ENCODE measurements at regions of chr17 and their contacts with region 1.

Region 1: GRCh38 chr17:7239091-7240027 is at the start of gene PHF23:
- DNase-seq: peak; percentile 98
- H3K4me3 Mint-ChIP-seq: peak within 1 kb of the TSS; percentile 87
- H3K27ac Mint-ChIP-seq: peak within 1 kb of the TSS; percentile 92
- H3K4me1 Mint-ChIP-seq: peaks cover 71% of the 10 kb centered on the region
- H3K27me3 Mint-ChIP-seq: no peaks in the 10 kb centered on the region
- total RNA-seq, gene PHF23: 45.9 to 53.1 TPM

Region 2: DNA sequence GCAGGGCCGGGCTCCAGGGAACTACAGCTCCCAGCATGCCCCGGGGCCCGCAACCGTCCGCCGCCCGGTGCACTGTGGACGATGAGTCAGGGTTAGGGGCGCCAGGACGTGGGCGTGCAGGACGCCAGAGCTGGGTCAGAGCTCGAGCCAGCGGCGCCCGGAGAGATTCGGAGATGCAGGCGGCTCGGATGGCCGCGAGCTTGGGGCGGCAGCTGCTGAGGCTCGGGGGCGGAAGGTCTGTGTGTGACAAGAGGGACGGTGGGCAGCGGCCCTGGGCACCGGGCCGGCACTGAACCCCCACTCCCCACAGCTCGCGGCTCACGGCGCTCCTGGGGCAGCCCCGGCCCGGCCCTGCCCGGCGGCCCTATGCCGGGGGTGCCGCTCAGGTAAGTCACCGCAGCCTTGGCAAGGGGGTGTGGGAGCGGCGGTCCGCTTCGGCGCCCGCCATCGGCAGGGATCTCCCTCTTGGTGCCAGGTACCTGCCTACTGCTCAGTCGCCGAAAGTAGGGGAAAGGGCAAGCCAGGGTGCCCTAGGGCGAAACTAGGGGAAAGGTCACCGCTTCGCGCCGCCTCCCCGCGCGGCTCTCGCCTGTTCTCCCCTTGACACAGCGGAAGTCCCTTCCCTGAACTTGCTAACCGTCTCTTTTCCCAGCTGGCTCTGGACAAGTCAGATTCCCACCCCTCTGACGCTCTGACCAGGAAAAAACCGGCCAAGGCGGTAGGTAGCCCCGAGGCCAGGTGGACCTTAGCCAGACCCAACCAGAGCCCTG is 19.4 kb before region 1 on chr17 and contains the starts of genes ACADVL and DLG4:
- CTCF ChIA-PET with region 1: interaction called, 44 read pairs
- POLR2A ChIA-PET with region 1: interaction called, 100 read pairs
- DNase-seq: peak; percentile 84
- H3K4me3 Mint-ChIP-seq: peak within 1 kb of the TSS; percentile 93
- H3K27ac Mint-ChIP-seq: peak within 1 kb of the TSS; percentile 89
- H3K4me1 Mint-ChIP-seq: peaks cover 48% of the 10 kb centered on the region
- H3K27me3 Mint-ChIP-seq: no peaks in the 10 kb centered on the region
- total RNA-seq, gene ACADVL: 364 to 370 TPM
- total RNA-seq, gene DLG4: 5.2 to 5.3 TPM

Region 3: GRCh38 chr17:7252176-7253043 is 13.1 kb after region 1 on chr17 and contains the start of gene ELP5:
- CTCF ChIA-PET with region 1: interaction called, 4 read pairs
- POLR2A ChIA-PET with region 1: interaction called, 74 read pairs
- DNase-seq: peak; percentile 93
- H3K4me3 Mint-ChIP-seq: peak within 1 kb of the TSS; percentile 91
- H3K27ac Mint-ChIP-seq: peak within 1 kb of the TSS; percentile 97
- H3K4me1 Mint-ChIP-seq: peaks cover 46% of the 10 kb centered on the region
- H3K27me3 Mint-ChIP-seq: no peaks in the 10 kb centered on the region
- total RNA-seq, gene ELP5: 40.4 to 42.1 TPM

Region 4: DNA sequence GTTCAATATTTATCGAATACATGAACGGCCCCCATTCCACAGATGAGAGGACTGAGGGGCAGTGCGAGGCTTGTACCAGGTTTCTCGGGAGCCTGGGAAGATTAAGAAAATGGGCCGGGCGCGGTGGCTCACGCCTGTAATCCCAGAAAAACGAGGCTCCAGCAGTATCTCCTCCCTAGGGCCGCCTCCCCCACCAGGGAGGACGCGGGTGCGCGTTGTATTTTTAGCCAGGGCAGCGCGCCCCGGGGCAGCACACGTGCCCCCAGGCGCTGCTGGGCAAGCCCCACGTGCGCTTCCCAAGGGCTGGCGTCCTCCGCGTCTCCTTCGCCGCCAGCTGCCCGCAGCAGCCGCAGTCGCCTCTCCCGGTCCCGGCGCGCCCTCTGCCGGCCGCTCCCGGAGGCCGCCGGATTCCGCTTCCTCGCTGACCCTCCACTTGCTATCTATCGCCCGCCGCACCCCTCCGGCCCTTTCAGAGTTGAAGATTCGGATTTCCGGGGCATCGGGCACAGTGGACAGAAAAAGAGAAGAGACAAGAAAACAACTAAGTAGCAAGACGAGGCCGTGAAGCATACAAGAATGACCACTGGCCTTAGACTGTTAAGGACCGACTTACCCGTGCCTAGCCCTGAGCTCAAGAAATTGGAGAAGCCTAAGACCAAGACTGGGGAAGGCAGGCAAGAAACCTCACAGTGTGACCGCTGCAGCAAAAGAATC is 57.0 kb after region 1 on chr17:
- CTCF ChIA-PET with region 1: interaction called, 10 read pairs
- POLR2A ChIA-PET with region 1: no interaction called
- DNase-seq: peak; percentile 71
- H3K4me3 Mint-ChIP-seq: no peak overlapping the region
- H3K27ac Mint-ChIP-seq: no peak overlapping the region
- H3K4me1 Mint-ChIP-seq: peaks cover 29% of the 10 kb centered on the region
- H3K27me3 Mint-ChIP-seq: peaks cover 40% of the 10 kb centered on the region

Region 5: GRCh38 chr17:7308625-7309433 is 69.5 kb after region 1 on chr17:
- CTCF ChIA-PET with region 1: no interaction called
- POLR2A ChIA-PET with region 1: interaction called, 12 read pairs
- DNase-seq: peak; percentile 84
- H3K4me3 Mint-ChIP-seq: peak overlapping the region; percentile 82
- H3K27ac Mint-ChIP-seq: peak overlapping the region; percentile 94
- H3K4me1 Mint-ChIP-seq: peaks cover 57% of the 10 kb centered on the region
- H3K27me3 Mint-ChIP-seq: no peaks in the 10 kb centered on the region

Region 6: DNA sequence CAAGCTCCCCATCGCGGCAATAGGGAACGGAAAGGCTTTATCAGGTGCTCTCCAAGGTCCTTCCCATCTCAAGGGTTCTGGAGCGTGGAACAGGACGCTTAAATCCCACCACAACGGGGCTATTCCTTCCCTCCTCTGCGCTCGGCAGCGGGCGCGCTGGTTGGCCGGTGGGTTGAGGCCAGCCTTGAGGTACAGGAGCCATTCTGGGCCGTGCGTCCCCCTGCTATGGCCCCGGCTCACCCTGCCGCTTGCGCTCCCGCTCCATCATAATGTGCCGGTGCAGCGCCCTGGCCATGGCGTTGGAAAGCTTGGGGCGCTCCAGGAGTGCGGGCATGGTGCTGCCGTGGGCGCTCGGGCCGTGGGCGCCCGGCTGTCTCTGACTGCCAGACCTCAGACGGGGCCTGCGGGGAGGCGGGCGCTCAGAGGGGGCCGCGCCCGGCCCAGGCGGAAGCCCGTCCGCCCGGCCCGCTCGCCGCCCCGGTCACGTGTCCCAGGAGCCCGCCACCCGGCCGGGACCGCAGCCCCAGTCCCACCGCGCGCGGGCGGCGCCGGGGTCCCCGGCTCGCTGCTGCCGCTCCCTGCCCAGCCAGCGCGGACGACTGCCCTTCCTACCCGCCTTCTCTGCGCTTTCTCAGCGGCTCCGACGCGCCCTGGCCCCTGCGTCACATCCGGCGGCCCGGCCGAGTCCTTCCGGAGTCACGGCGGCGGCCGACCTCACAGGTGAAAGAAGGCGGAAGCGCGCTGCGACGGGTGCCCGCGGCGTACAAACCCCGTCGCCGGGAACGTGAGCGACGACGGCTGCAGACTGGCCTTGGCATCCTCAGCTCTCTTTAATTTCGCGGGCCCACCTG is 75.6 kb after region 1 on chr17 and contains the start of gene GPS2:
- CTCF ChIA-PET with region 1: no interaction called
- POLR2A ChIA-PET with region 1: interaction called, 11 read pairs
- DNase-seq: peak; percentile 95
- H3K4me3 Mint-ChIP-seq: peak within 1 kb of the TSS; percentile 93
- H3K27ac Mint-ChIP-seq: peak within 1 kb of the TSS; percentile 91
- H3K4me1 Mint-ChIP-seq: peaks cover 58% of the 10 kb centered on the region
- H3K27me3 Mint-ChIP-seq: no peaks in the 10 kb centered on the region
- total RNA-seq, gene GPS2: 69.8 to 74.7 TPM